Motor neuron (in vitro differentiated cells): ENCODE measurements at regions of chr16 and their contacts with region 1.

Region 1: GRCh38 chr16:22948603-22949368 is 134.8 kb downstream of the HS3ST2 start:
- ATAC-seq: peak in 3 of 8 experiments; percentile 94 to 96 (median 96)
- H3K4me3 ChIP-seq: no peak overlapping the region
- H3K27ac ChIP-seq: no peak overlapping the region
- H3K4me1 ChIP-seq: no peaks in the 10 kb centered on the region

Region 2: GRCh38 chr16:23026784-23027362 is 78.1 kb after region 1 on chr16:
- in situ Hi-C with region 1: loop called in 1 of 9 experiments (anchors 25 kb)
- ATAC-seq: peak in 4 of 8 experiments; percentile 20 to 50 (median 34)
- H3K4me3 ChIP-seq: no peak overlapping the region
- H3K27ac ChIP-seq: no peak overlapping the region
- H3K4me1 ChIP-seq: peaks cover 10 to 26% of the 10 kb centered on the region in 2 donors

Region 3: GRCh38 chr16:23160574-23160973 is 211.8 kb after region 1 on chr16:
- in situ Hi-C with region 1: no loop called
- ATAC-seq: no peak
- H3K4me3 ChIP-seq: no peak overlapping the region
- H3K27ac ChIP-seq: no peak overlapping the region
- H3K4me1 ChIP-seq: no peaks in the 10 kb centered on the region